ENCODE measurements at regions of chr16 and their contacts with region 1.

Region 1: DNA sequence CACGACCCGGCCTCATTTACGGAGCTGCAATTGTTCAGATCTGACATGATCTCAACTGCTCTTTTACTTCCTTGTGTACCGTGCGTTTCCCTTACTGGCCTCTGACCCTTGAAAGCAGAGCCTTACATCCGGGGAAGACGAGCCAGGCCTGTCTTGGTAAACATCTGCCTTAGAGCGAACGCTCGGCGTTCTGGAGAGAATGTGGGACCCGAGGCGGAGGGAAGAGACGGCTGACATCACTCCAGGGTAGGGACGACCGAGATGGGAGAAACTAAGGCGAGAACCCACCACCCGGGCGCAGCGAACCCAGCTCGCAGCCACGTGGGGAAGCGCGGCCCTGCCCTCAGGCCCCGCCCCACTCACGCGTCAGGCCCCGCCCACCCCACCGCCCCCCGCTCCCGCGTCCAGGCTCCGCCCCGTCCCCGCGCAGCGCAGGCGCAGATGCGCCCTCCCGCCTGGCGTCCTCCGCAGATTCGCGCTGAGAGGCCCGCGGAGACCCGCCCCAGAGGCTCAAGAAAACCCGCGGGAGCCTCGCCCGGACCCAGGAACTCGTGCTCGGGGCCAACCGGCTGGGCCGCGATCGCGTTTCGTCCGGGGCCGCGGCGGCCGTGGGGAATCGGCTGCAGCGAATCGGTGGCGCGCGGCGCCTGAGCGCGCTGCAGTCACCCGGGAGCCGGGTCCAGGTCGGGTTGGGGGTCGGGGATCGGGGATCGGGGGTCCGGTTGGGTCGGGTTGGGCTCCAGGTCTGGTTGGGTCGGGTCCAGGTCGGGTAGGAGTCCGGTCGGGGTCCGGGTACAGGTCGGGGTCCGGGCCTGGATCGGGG is at the start of gene TELO2:
- DNase-seq: peak; percentile 94
- total RNA-seq, gene TELO2: 20.8 to 21.4 TPM

Region 2: GRCh38 chr16:1556254-1556653 is 63.1 kb after region 1 on chr16:
- intact Hi-C with region 1: loop called in 1 of 2 experiments (anchors 10 kb)
- DNase-seq: no peak

Region 3: DNA sequence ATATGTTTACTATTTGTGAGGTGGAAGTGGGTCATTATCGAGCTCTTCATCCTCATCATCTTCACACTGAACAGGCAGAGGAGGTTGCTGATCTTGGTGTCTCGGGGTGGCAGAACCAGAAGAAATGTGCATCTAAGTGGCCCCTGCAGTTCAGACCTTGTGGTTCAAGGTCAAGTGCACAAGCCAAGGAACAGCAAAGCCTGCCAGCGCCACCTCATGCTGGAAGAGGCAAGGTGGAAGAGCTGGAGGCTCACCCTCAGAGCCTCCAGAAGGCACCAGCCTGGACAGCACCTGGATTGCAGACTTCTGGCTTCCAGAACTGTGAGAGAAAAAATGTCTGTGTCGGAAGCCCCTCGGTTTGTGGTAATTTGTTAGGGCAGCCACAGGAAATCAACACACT is 86.1 kb after region 1 on chr16:
- intact Hi-C with region 1: no loop called
- DNase-seq: no peak

Region 4: GRCh38 chr16:1602285-1602684 is 109.2 kb after region 1 on chr16:
- intact Hi-C with region 1: loop called in 1 of 2 experiments (anchors 5 kb)
- DNase-seq: no peak

Region 5: DNA sequence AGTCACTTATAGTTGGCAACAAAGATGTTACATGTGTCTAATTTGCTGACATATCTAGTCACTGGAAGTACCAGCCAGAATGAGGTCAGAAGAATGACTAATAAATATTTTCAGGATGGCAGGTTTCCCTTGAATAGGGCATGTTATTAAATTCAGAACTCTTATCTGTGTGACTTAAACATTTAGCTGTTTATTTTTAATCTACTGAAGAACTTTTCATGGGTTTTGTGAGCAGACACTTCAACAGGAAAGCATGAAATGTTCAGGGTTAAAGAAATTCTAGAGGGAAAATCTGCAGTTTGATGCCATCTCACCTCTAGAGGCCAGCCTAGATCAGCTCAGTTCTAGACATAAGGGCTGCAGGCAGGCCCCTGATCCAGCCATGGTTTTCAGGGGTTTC is 198.1 kb after region 1 on chr16:
- intact Hi-C with region 1: loop called in 1 of 2 experiments (anchors 10 kb)
- DNase-seq: no peak

Measured in posterior vena cava (tissue), 2 donors.